K562 (cell line): ENCODE measurements at regions of chr10 and their contacts with region 1.

Region 1: GRCh38 chr10:91694170-91694794 is 61.4 kb upstream of the PPP1R3C start:
- DNase-seq: peak; percentile 42 to 59 (median 44)
- ATAC-seq: peak; percentile 74
- H3K4me3 ChIP-seq: no peak overlapping the region
- H3K27ac ChIP-seq: no peak overlapping the region
- H3K4me1 ChIP-seq: peaks cover 0 to 6% of the 10 kb centered on the region in 2 experiments; a peak in 2 of 5 replicates
- H3K27me3 ChIP-seq: no peaks in the 10 kb centered on the region
- CTCF ChIP-seq: peak; percentile 57 to 75 (median 68)
- EP300 ChIP-seq: no peak
- POLR2A ChIP-seq: no peak
- RAD21 ChIP-seq: peak; percentile 79 to 90

Region 2: DNA sequence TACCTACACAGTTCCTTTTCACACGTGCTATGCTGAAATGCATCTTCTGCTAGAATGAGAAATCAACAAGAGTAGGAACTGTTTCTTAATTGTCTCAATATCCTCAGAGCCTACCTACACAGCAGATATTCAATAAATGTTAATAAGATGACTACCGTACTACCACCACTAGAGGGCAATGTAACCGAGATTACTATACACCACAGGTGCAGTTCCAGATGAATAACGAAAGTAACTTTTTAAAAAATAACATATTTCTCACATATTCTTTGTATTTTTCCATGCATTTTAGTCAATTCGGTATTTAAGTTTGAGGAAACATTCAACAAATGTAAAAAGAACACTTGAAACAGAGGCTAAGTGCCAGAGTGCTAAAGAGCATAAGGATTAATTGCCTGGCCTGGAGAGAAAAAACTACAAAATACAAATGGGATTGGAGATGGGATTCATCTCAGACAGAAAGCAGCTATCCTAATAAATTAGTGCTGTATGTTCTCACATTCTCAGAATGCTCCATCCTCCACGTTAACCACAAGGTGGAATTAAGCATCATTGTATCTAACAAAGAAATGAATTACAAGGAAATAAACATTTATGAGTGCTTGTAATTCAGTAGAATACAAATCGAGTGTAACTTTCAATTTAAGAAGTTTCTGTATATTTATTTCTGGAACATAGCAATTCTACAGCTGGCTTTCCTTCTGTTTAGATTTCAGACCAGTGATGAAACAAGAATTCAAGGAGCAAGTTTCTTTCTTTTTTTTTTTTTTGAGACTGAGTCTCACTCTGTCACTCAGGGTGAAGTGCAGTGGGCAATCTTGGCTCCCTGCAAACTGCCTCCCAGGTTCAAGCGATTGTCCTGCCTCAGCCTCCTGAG is 304.4 kb before region 1 on chr10:
- CTCF ChIA-PET with region 1: interaction called, 3 read pairs
- POLR2A ChIA-PET with region 1: no interaction called
- in situ Hi-C with region 1: no loop called
- intact Hi-C with region 1: loop called (anchors 5 kb)
- DNase-seq: peak; percentile 15 to 63 (median 24)
- ATAC-seq: peak; percentile 87
- H3K4me3 ChIP-seq: no peak overlapping the region
- H3K27ac ChIP-seq: no peak overlapping the region
- H3K4me1 ChIP-seq: no peaks in the 10 kb centered on the region
- H3K27me3 ChIP-seq: no peaks in the 10 kb centered on the region; a peak in 1 of 5 replicates
- CTCF ChIP-seq: peak in 2 of 3 experiments; percentile 27 to 52; a peak in 3 of 6 replicates
- EP300 ChIP-seq: no peak
- POLR2A ChIP-seq: no peak
- RAD21 ChIP-seq: peak; percentile 55 to 74; a peak in 3 of 4 replicates

Region 3: DNA sequence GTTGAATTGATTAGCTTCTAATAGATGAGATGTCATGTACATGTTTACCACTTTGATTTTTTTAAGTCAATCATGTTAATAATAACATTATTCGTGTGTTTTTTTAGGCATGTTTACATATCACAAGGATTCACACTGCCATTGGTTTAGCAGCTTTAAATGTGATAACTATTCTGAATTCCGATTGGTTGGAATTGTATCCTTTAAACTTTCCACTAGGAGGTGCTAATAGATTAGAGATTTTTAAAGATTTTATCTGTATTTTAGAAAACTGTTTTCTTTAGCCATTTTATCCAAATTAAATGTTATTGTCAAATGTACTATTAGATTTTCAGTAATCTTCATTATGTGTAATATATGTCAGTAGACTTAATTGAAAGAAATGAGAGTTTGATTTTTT is 201.0 kb before region 1 on chr10:
- CTCF ChIA-PET with region 1: interaction called, 3 read pairs
- POLR2A ChIA-PET with region 1: no interaction called
- in situ Hi-C with region 1: no loop called
- intact Hi-C with region 1: loop called (anchors 5 kb)
- DNase-seq: peak in 2 of 4 experiments; percentile 3 to 27
- ATAC-seq: no peak
- H3K4me3 ChIP-seq: no peak overlapping the region
- H3K27ac ChIP-seq: no peak overlapping the region
- H3K4me1 ChIP-seq: no peaks in the 10 kb centered on the region
- H3K27me3 ChIP-seq: no peaks in the 10 kb centered on the region
- CTCF ChIP-seq: peak in 1 of 3 experiments; percentile 41; a peak in 3 of 6 replicates
- EP300 ChIP-seq: no peak
- POLR2A ChIP-seq: no peak
- RAD21 ChIP-seq: peak; percentile 53 to 58

Region 4: DNA sequence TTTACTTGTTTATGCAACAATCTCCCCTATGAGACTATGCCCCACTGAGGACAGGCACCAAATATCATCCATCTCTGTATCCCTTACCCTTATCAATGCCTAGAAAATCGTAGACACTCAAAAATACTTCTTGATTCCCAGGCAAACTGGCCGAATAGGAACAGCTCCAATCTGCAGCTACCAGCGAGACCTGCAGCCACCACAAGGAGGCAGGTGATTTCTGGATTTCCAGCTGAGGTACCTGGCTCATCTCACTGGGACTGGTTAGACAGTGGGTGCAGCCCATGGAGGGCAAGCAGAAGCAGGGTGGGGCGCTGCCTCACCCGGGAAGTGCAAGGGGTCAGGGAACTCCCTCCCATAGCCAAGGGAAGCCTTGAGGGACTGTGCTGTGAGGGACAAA is 50.6 kb before region 1 on chr10:
- CTCF ChIA-PET with region 1: no interaction called
- POLR2A ChIA-PET with region 1: interaction called, 3 read pairs
- in situ Hi-C with region 1: loop called (anchors 5 kb)
- intact Hi-C with region 1: loop called (anchors 1 kb)
- DNase-seq: no peak
- ATAC-seq: no peak
- H3K4me3 ChIP-seq: no peak overlapping the region
- H3K27ac ChIP-seq: no peak overlapping the region
- H3K4me1 ChIP-seq: no peaks in the 10 kb centered on the region
- H3K27me3 ChIP-seq: no peaks in the 10 kb centered on the region
- CTCF ChIP-seq: peak in 2 of 3 experiments; percentile 16 to 30; a peak in 2 of 6 replicates
- EP300 ChIP-seq: no peak
- POLR2A ChIP-seq: no peak
- RAD21 ChIP-seq: peak in 1 of 2 experiments; percentile 52; a peak in 2 of 4 replicates

Region 5: DNA sequence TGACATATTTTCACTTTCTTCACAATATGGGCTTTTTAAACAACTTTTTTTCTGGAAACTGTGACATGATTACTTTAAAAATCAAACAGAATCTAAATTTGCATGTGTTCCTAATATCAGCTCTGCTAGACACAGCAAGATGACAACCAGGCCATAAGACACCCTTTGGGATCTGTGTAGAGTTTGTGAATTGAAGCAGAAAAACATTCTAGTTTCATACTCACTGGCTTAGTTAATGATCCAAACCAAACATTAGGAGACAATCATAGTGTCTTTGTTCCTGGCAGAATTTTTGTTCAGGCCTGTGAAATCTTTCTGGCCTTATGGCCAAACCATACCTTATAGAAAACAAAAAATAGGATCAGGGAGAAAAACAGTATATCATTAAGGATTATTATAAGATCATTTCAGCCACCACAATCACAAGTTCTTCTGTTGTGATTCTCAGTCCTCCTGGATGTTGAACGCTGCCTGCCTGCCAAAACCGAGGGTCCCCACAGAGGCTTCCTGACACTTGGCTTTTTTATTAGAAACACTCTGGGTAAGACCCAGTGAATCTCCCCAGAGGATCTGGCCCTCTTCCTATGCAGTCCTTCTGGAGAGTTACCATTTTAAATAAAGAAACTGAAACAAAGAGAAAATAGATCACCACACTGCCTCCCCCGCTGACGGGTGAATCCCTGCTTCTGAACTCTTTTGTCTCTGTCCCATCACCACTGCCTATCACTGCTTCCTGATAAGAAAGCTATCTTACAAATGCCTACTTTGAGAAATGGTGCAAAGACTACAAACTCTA is 17.8 kb after region 1 on chr10:
- CTCF ChIA-PET with region 1: no interaction called
- POLR2A ChIA-PET with region 1: no interaction called
- in situ Hi-C with region 1: no loop called
- intact Hi-C with region 1: no loop called
- DNase-seq: no peak
- ATAC-seq: no peak
- H3K4me3 ChIP-seq: no peak overlapping the region
- H3K27ac ChIP-seq: no peak overlapping the region
- H3K4me1 ChIP-seq: peaks cover 0 to 11% of the 10 kb centered on the region in 2 experiments; a peak in 1 of 5 replicates
- H3K27me3 ChIP-seq: no peaks in the 10 kb centered on the region
- CTCF ChIP-seq: no peak
- EP300 ChIP-seq: no peak
- POLR2A ChIP-seq: no peak
- RAD21 ChIP-seq: no peak